ENCODE measurements at regions of chr1 and their contacts with region 1.

Region 1: GRCh38 chr1:152189657-152190442 is 30.8 kb upstream of the RPTN start:
- DNase-seq: peak; percentile 72
- ATAC-seq: peak; percentile 65

Region 2: GRCh38 chr1:151934048-151934493 is 255.8 kb before region 1 on chr1:
- intact Hi-C with region 1: loop called (anchors 10 kb)
- DNase-seq: no peak
- ATAC-seq: peak; percentile 88

Region 3: DNA sequence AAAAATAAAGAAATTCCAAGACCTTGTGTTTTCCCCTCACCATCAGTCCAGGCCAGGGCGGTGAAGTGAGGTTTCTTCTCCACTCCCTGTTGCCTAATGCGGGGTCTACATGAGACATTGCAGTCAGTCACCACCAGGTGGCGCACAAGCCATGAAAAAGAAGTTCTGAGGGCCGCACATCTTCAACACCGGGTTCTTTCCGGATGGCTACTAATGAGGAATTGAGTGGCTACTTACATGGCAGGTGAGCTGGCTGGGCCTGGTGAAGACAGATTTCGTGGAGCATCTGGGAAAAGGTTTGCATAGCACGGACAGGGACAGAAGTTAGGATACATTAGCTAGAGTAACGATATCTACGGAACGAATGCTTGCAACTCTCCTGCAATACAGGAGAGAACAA is 137.2 kb before region 1 on chr1:
- intact Hi-C with region 1: loop called (anchors 1 kb)
- DNase-seq: peak; percentile 88
- ATAC-seq: peak; percentile 35

Region 4: DNA sequence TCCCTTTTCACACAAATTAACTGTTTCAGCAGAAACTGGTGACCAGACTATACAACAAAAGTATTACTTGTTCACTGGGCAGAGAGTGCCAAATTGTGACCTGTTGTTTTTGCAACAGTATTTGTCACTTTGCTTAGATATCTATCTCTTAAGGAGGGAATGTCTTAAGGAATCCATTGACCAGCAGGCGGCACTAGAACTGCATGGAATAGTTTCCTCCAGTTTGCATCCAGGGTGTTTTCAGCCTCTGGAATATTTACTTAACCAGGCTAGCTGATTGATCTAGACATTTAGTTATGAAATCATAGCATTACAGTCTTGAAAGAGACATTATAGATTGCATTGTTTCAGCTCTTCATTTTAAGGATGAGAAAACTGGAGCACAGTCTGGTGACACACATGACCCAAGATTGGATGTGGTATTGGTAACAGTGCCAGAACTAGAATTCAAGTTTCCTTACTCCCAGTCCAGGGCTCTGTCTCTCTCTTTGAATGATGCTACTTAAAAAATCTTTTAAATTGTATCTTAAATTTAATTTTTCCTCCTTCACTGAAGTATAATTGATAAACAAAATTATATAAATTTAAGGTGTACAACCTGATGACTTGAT is 47.8 kb before region 1 on chr1:
- intact Hi-C with region 1: loop called (anchors 1 kb)
- DNase-seq: no peak
- ATAC-seq: no peak

Region 5: GRCh38 chr1:152440635-152441471 is 251.0 kb after region 1 on chr1:
- intact Hi-C with region 1: loop called (anchors 2 kb)
- DNase-seq: peak; percentile 80
- ATAC-seq: peak; percentile 78

Region 6: GRCh38 chr1:152459596-152460528 is 270.0 kb after region 1 on chr1:
- intact Hi-C with region 1: loop called (anchors 1 kb)
- DNase-seq: peak; percentile 80
- ATAC-seq: peak; percentile 54

Measured in Right ventricle myocardium inferior (tissue), 1 donor.